Ovary (tissue), 10 donors: ENCODE measurements at regions of chr5 and their contacts with region 1.

Region 1: DNA sequence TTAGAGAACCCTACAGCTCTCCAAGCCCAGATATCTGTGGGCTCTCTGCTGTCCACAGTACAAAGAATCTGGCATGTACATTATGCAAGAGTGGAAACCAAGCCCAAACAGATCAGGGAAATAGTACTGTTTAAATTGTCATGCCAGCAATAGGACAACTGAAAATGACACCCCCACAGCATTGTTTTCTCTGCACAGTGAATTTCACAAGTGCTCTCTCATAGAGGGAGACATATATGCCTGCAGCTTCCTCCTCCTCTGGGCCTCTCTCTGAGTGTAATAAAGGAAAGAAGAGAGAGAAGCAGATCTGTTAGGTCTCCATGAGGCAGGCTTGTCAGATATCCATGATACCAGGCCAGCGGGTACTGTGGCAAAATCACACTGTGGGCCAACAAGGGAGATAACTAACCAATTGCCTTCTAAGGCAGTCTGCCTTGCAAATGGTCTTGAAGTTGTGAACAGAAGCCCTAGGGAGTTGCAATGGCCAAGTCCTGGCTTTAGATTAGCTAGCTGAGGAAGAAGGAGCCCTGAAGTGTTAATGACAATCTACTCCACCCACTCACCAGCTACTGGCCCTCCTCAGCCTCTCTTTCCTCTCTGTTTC is 54.4 kb upstream of the JMY start:
- DNase-seq: no peak
- H3K4me3 ChIP-seq: no peak overlapping the region
- H3K27ac ChIP-seq: no peak overlapping the region
- H3K4me1 ChIP-seq: no peaks in the 10 kb centered on the region
- H3K27me3 ChIP-seq: no peaks in the 10 kb centered on the region
- CTCF ChIP-seq: no peak
- EP300 ChIP-seq: no peak
- POLR2A ChIP-seq: no peak

Region 2: DNA sequence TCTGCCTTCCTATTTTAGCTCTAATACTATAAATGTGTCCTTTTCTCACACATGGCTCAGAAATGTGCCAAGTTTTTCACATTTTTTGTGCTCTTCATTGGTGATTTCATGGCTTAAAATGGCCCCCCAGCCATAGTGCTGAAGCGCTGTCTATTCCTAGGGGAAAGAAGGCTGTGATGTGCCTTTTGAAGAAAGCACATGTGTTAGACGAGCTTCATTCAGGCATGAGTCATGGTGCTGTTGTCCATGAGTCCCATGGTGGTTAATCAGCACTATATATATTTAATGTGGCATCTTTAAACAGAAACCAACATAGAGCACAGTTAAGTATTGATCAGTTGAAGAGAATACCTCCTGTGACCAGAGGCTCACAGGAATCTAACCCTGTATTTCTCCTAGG is 1915.2 kb before region 1 on chr5:
- intact Hi-C with region 1: no loop called
- DNase-seq: no peak
- H3K4me3 ChIP-seq: no peak overlapping the region
- H3K27ac ChIP-seq: no peak overlapping the region
- H3K4me1 ChIP-seq: no peaks in the 10 kb centered on the region
- H3K27me3 ChIP-seq: no peaks in the 10 kb centered on the region
- CTCF ChIP-seq: no peak
- EP300 ChIP-seq: no peak
- POLR2A ChIP-seq: no peak

Region 3: DNA sequence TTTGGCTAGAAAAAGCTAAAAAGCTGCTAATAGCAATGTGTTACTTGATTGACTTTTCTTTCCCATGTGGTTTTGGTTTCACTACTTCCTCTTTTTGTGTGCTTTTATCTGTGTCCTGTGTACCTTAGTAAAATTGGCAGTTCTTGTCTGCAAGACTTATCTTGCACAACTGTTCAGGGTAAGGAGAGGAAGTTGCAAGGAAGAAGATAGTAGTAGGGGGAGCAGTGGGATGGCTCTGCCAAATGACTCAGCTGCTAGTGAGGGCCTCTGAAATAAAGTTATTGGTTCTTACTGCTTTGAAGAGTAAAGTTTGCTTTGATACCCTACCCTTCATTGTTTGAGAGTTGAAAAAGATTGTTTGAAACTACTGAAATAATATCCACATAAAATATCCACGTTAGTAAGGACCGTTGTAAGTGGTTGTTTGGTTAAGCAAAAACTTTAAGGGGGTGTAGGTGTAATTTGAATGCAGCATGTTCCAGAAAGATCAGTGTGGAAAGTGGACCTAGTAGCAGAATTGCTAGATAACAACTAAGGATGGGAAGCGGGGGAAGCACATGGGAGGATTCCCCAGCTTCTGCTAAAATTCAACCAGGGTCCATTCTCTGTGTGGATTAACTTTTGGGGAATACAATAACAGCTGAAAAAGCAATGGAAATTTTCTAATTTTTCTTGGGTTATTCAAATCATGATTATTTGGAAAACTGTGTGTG is 697.6 kb before region 1 on chr5:
- intact Hi-C with region 1: loop called in 1 of 4 experiments (anchors 5 kb)
- DNase-seq: peak in 1 of 5 donors; percentile 36
- H3K4me3 ChIP-seq: no peak overlapping the region
- H3K27ac ChIP-seq: no peak overlapping the region
- H3K4me1 ChIP-seq: peaks cover 6% of the 10 kb centered on the region
- H3K27me3 ChIP-seq: no peaks in the 10 kb centered on the region
- CTCF ChIP-seq: no peak
- EP300 ChIP-seq: no peak
- POLR2A ChIP-seq: no peak

Region 4: DNA sequence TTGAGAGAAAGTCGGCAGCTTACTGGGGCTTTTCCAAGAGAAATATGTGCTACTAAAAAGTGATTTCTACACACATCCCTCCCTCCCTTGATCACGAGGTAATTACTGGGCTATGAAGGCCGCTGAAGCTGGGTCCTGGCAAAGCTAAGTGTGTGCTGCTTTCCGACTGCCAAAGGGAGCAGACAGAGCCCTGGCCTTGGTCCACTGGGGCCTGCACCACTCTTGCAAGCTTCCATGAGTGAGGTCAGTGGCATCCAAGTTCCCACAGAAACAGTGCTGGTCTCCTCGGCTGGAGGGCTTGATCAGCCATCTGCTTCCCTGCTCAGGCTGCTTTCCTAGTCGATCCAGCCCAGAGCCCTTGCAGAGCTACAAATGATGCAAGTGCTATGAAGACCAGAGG is 378.2 kb before region 1 on chr5:
- intact Hi-C with region 1: no loop called
- DNase-seq: peak; percentile 64 to 84 (median 76)
- H3K4me3 ChIP-seq: no peak overlapping the region
- H3K27ac ChIP-seq: peak overlapping the region in 1 of 2 donors; percentile 46
- H3K4me1 ChIP-seq: peaks cover 18% of the 10 kb centered on the region
- H3K27me3 ChIP-seq: no peaks in the 10 kb centered on the region
- CTCF ChIP-seq: no peak
- EP300 ChIP-seq: no peak
- POLR2A ChIP-seq: no peak

Region 5: DNA sequence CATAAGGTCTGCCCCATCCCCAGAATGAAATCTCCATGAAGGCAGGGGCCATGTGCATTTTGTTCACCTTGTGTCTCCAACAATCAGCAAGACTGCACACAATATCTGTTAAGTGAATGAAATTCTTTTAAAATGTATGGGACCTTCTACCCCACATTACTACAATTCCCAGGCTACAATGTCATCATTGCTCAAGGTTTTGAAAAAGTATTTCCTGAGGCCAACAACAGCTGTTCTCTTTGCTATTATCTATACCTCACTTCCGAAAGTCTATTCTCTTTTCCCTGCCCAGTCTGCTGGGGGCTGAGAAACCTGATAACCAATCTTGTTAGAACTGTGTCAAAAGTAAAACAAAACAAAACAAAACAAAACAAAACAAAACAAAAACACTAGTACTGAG is 303.2 kb after region 1 on chr5:
- intact Hi-C with region 1: no loop called
- DNase-seq: no peak
- H3K4me3 ChIP-seq: no peak overlapping the region
- H3K27ac ChIP-seq: no peak overlapping the region
- H3K4me1 ChIP-seq: no peaks in the 10 kb centered on the region
- H3K27me3 ChIP-seq: no peaks in the 10 kb centered on the region
- CTCF ChIP-seq: no peak
- EP300 ChIP-seq: no peak
- POLR2A ChIP-seq: no peak